K562 (cell line): ENCODE measurements at regions of chr19 and their contacts with region 1.

Region 1: GRCh38 chr19:1113033-1113985 is 9.5 kb downstream of the GPX4 start:
- DNase-seq: peak; percentile 96 to 97 (median 96)
- ATAC-seq: peak; percentile 89
- H3K4me3 ChIP-seq: no peak overlapping the region
- H3K27ac ChIP-seq: peak overlapping the region; percentile 78
- H3K4me1 ChIP-seq: peaks cover 9 to 81% of the 10 kb centered on the region in 2 experiments
- H3K27me3 ChIP-seq: no peaks in the 10 kb centered on the region
- CTCF ChIP-seq: peak; percentile 86 to 93 (median 89)
- EP300 ChIP-seq: no peak
- POLR2A ChIP-seq: no peak; the same call in 1 of the 2 replicates
- RAD21 ChIP-seq: peak; percentile 80 to 84

Region 2: DNA sequence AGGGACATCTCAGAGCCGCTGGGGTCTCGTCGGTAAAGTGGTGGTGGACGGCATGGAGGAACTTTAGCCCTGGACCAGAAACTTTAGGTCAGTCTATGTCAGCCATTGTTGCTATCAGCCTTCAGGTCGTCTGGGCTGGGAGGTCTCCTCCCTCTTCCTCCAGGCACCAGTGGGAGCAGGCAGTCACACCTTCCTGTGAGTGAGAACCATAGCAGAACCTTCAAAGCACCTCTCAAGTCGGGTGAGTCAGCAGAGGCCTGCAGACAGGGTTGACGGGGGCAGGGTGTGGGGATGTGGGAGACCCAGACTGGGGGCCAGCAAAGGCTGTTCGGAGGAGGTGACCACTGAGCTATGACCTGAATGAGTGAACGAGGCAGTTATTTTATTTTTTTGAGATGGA is 76.1 kb after region 1 on chr19:
- CTCF ChIA-PET with region 1: interaction called, 21 read pairs
- POLR2A ChIA-PET with region 1: interaction called, 4 read pairs
- in situ Hi-C with region 1: no loop called
- intact Hi-C with region 1: loop called (anchors 5 kb)
- DNase-seq: peak; percentile 53 to 84 (median 65)
- ATAC-seq: peak; percentile 86
- H3K4me3 ChIP-seq: no peak overlapping the region
- H3K27ac ChIP-seq: peak overlapping the region; percentile 51; the same call in 2 of the 3 replicates
- H3K4me1 ChIP-seq: peaks cover 13 to 25% of the 10 kb centered on the region in 2 experiments
- H3K27me3 ChIP-seq: no peaks in the 10 kb centered on the region
- CTCF ChIP-seq: no peak
- EP300 ChIP-seq: no peak
- POLR2A ChIP-seq: no peak
- RAD21 ChIP-seq: no peak

Region 3: GRCh38 chr19:1295169-1296012 is 182.1 kb after region 1 on chr19:
- CTCF ChIA-PET with region 1: no interaction called
- POLR2A ChIA-PET with region 1: no interaction called
- in situ Hi-C with region 1: no loop called
- intact Hi-C with region 1: no loop called
- DNase-seq: peak; percentile 63 to 99 (median 98)
- ATAC-seq: peak; percentile 88
- H3K4me3 ChIP-seq: peak overlapping the region; percentile 40
- H3K27ac ChIP-seq: no peak overlapping the region
- H3K4me1 ChIP-seq: peaks cover 0 to 79% of the 10 kb centered on the region in 2 experiments; a peak in 3 of 5 replicates
- H3K27me3 ChIP-seq: peaks cover 22 to 58% of the 10 kb centered on the region in 2 experiments; a peak in 3 of 5 replicates
- CTCF ChIP-seq: no peak
- EP300 ChIP-seq: no peak
- POLR2A ChIP-seq: no peak
- RAD21 ChIP-seq: no peak